BJ (cell line): ENCODE measurements at regions of chr5 and their contacts with region 1.

Region 1: DNA sequence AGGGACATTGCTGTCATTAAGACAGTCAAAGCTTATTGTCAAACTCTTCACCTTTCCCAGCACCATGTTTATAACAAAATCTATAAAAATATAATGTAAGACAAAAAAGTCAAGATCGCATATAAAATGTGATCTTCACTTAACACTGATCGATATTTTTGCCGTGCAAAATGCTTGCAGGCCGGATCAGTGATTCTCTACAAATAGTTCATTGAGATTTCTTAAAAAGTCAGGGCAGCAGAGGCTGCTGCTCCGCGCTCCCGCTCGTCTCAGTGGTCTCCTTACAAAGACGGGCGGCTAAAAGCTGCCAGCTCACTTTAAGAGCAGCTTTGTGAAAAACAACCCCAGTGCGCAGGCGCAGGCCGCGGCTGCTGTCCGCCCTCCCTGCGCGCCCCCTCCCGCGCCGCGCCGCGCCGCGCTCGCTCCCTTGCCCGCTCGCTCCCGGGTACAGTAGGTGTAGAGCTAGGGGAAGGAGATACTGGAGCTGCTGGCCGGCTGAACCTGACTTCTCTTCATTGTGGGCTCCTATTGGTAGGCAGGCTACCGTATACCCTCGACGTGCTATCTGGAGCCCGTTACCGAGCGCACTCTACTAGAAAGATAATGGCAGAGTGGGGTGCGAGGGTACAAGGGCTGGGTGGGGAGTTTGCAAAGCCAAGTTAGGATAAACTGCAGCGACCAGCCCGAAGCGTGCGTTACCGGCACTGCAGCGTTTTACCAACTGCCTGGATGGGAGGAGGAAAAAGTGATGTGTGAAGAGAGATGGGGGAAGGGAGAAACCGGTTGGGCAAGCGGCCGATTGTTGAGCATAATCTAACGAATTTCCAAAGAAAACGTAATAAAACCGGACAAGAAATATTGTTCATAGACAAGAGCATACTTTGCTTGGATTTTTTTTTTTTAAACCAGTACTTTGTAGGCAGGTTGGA is at the start of gene ARRDC3:
- DNase-seq: peak; percentile 87
- H3K4me3 ChIP-seq: peak within 1 kb of the TSS; percentile 64
- H3K27me3 ChIP-seq: no peaks in the 10 kb centered on the region
- CTCF ChIP-seq: no peak
- polyA plus RNA-seq, gene ARRDC3: 20.7 and 37.4 TPM in 2 replicates

Region 2: GRCh38 chr5:89480406-89481007 is 1902.8 kb before region 1 on chr5:
- CTCF ChIA-PET with region 1: no interaction called
- POLR2A ChIA-PET with region 1: no interaction called
- DNase-seq: no peak
- H3K4me3 ChIP-seq: no peak overlapping the region
- H3K27me3 ChIP-seq: no peaks in the 10 kb centered on the region
- CTCF ChIP-seq: no peak

Region 3: DNA sequence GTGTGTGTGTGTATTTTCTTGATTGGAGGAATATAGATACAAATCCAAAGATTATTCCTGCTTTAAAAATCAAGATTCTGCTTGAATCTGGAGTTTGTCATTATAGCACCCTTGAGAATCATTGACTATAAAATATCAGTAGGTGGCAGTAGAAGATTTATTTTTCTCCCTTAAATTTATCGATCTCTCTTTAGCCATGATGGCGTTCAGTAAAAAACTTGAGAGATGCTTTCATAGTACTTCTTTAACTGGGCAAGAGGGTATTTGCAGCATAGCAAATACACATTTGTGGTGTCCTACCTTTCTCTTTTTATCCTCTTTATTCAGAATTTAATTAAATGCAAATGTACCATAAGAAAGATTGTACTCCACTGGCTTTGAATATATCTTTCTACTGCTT is 517.0 kb before region 1 on chr5:
- CTCF ChIA-PET with region 1: interaction called, 35 read pairs
- POLR2A ChIA-PET with region 1: no interaction called
- DNase-seq: no peak
- H3K4me3 ChIP-seq: no peak overlapping the region
- H3K27me3 ChIP-seq: no peaks in the 10 kb centered on the region
- CTCF ChIP-seq: peak; percentile 34

Region 4: GRCh38 chr5:91101600-91102379 is 281.5 kb before region 1 on chr5:
- CTCF ChIA-PET with region 1: interaction called, 70 read pairs
- POLR2A ChIA-PET with region 1: interaction called, 4 read pairs
- DNase-seq: no peak
- H3K4me3 ChIP-seq: no peak overlapping the region
- H3K27me3 ChIP-seq: no peaks in the 10 kb centered on the region
- CTCF ChIP-seq: peak; percentile 77

Region 5: DNA sequence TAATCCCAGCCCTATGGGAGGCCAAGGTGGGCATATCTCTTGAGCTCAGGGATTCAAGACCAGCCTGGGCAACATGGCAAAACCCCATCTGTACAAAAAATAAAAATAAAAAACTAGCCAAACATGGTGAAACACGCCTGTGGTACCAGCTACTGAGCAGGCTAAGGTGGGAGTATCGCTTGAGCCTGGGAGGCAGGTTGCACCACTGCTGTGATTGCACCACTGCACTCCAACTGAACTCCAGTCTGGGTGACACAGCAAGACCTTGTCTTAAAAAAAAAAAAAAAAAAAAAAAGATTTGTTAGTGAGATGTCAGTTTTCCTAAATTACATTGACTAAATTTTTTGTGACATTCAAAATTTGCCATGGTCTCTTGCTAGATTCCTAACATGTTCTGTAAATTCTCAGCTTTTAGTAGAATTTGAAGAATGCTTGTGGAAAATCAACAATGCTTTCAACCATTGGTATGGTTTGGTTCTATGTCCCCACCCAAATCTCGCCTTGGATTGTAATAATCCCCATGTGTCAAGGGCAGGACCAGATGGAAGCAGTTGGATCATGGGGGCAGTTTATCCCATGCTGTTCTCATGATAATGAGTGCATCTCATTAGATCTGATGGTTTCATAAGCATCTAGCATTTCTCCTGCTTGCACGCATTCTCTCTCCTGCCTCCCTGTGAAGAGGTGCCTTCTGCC is 236.2 kb before region 1 on chr5:
- CTCF ChIA-PET with region 1: interaction called, 4 read pairs
- POLR2A ChIA-PET with region 1: interaction called, 17 read pairs
- DNase-seq: peak; percentile 75
- H3K4me3 ChIP-seq: no peak overlapping the region
- H3K27me3 ChIP-seq: no peaks in the 10 kb centered on the region
- CTCF ChIP-seq: no peak

Region 6: GRCh38 chr5:91219803-91220371 is 163.4 kb before region 1 on chr5:
- CTCF ChIA-PET with region 1: interaction called, 20 read pairs
- POLR2A ChIA-PET with region 1: no interaction called
- DNase-seq: no peak
- H3K4me3 ChIP-seq: no peak overlapping the region
- H3K27me3 ChIP-seq: no peaks in the 10 kb centered on the region
- CTCF ChIP-seq: peak; percentile 39

Region 7: DNA sequence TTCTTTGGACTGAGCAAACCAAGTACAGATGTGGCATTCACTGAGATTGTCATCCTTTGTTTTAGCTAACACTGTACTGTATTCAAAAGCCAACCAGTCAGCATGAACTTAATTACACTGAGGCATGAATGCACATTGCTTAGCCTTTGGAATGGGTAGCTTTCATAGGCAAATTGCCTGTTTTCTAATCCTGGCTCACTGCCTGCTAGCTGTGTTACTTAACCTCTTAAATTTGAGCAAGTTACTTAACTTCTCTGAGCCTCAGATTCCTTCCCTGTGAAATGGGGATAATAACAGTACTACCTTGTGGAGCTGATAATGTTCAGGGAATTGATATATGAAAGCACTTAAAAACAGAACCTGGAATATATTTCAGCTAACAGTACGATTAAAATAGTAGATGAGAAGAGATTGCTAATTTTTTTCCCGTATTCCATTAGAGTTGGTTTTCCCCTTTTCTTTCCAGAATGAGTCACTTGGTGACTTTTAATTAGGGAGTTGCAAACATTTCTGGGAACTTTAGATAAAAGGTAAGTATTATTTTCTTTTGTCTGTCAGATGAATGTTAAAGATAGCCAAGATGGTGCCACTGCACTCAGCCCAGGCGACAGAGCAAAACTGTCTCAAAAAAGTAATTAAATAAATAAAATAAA is 44.1 kb before region 1 on chr5:
- CTCF ChIA-PET with region 1: no interaction called
- POLR2A ChIA-PET with region 1: no interaction called
- DNase-seq: peak; percentile 19
- H3K4me3 ChIP-seq: no peak overlapping the region
- H3K27me3 ChIP-seq: no peaks in the 10 kb centered on the region
- CTCF ChIP-seq: no peak

Region 8: DNA sequence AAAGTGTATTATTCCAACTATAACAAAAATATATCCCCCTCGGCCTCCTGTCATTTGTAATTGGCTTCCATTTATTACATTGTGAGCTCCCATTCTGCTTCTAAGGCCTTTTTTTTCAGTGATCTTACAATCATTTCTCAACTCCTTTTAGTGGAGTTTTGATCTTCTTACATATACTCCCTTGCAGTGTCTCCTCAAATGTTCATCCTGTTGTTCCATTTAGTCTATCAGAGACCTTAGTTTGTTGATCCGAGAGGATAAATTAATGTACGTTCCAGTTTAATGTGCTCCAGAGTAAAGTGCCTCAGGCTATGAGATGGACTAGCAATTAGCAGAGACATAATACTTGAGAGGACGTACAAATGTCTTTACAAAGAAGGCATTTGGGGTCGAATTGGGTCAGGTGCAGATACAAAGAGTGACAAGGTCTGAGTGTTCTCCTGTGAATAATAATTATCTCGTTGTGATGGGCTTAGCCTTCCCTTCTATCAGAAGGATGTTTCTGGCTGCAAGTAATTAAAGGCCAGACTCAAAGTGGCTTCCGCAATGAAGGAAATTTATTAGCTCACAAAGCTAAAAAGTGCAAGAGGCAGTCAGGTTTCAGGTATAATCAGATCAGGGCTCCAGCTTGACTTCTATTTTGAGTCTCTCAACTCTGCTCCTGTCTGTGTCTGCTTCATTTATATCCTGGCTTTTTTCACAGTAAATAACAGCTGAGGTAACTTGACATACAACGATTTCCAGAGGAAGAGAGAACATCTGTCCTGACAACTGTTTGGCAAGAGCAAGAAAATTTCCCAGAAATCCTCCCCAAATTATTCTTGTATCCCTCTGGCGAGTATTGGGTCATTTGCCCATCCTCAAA is 30.2 kb before region 1 on chr5:
- CTCF ChIA-PET with region 1: no interaction called
- POLR2A ChIA-PET with region 1: no interaction called
- DNase-seq: no peak
- H3K4me3 ChIP-seq: no peak overlapping the region
- H3K27me3 ChIP-seq: no peaks in the 10 kb centered on the region
- CTCF ChIP-seq: no peak

Region 9: DNA sequence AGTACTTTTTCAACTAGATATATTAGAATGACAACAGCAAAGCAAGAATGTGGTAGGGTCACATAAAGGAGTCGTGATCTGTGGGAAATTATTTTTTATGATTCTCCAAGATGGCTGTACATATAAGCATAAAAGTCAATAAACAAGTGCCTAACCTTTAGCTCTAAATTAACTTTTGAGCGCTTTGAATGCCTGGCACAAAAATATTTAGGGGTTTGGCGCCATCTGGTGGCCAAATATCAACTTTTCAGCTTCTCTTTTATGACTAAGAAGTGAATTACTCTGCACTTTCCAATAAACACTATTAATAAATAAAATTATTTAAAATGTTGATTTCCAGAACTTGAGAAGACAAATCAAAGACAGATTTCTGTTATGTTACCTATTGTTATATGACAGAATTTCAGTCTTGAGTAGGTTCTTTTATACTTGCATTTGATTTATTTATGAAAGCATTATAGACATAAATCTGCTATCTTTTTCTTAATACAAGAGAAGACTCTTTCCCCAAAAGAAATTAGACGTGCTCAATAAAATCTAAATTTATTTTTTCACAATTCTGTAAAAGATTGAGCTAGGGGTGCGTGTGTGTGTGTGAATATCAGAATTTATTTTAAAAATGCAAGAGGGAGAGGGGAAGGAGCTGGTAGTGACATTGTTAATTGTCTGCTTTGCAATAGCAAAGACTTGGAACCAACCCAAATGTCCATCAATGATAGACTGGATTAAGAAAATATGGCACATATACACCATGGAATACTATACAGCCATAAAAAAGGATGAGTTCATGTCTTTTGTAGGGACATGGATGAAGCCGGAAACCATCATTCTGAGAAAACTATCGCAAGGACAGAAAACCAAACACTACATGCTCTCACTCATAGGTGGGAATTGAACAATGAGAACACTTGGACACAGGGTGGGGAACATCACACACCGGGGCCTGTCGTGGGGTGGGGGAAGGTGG is 36.6 kb after region 1 on chr5:
- CTCF ChIA-PET with region 1: interaction called, 90 read pairs
- POLR2A ChIA-PET with region 1: no interaction called
- DNase-seq: no peak
- H3K4me3 ChIP-seq: no peak overlapping the region
- H3K27me3 ChIP-seq: no peaks in the 10 kb centered on the region
- CTCF ChIP-seq: peak; percentile 53

Region 10: GRCh38 chr5:91562922-91563321 is 179.6 kb after region 1 on chr5:
- CTCF ChIA-PET with region 1: no interaction called
- POLR2A ChIA-PET with region 1: no interaction called
- DNase-seq: no peak
- H3K4me3 ChIP-seq: no peak overlapping the region
- H3K27me3 ChIP-seq: no peaks in the 10 kb centered on the region
- CTCF ChIP-seq: no peak